ENCODE measurements at regions of chr10 and their contacts with region 1.

Region 1: GRCh38 chr10:63866075-63866746 is 345.0 kb downstream of the REEP3 start:
- H3K4me3 Mint-ChIP-seq: no peak overlapping the region
- H3K27ac Mint-ChIP-seq: no peak overlapping the region
- H3K4me1 Mint-ChIP-seq: peaks cover 8% of the 10 kb centered on the region
- H3K27me3 Mint-ChIP-seq: peaks cover 15% of the 10 kb centered on the region

Region 2: GRCh38 chr10:63707254-63707910 is 158.8 kb before region 1 on chr10:
- intact Hi-C with region 1: no loop called
- H3K4me3 Mint-ChIP-seq: no peak overlapping the region
- H3K27ac Mint-ChIP-seq: peak overlapping the region; percentile 27
- H3K4me1 Mint-ChIP-seq: peaks cover 40% of the 10 kb centered on the region
- H3K27me3 Mint-ChIP-seq: peaks cover 8% of the 10 kb centered on the region

Region 3: DNA sequence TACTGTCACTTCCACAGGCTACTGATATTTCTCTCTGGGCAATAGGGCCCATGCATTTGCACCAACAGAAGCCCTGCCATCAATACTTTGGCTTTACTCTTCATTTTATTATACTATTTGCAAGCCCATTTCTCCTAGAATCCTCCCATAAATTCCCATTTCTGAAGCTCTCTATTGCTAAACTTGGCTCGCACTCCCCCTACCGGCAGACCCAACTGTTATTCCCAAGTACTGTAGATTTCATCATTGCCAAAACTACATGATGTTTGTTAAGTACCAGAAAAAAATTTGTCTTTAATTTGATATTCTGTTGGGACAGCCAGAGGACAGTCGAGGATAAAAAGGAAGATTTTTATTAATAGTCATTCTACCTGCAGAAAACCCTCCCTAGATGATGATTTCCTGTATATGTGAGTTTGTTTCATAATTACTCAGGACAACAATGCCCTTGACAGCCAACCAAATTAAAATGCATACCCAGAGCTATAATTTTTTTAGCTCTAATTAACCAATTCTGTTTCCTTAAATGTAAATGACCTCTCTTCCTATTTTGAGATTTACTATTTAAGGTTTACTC is 46.4 kb before region 1 on chr10:
- intact Hi-C with region 1: no loop called
- H3K4me3 Mint-ChIP-seq: no peak overlapping the region
- H3K27ac Mint-ChIP-seq: no peak overlapping the region
- H3K4me1 Mint-ChIP-seq: no peaks in the 10 kb centered on the region
- H3K27me3 Mint-ChIP-seq: peaks cover 4% of the 10 kb centered on the region

Region 4: DNA sequence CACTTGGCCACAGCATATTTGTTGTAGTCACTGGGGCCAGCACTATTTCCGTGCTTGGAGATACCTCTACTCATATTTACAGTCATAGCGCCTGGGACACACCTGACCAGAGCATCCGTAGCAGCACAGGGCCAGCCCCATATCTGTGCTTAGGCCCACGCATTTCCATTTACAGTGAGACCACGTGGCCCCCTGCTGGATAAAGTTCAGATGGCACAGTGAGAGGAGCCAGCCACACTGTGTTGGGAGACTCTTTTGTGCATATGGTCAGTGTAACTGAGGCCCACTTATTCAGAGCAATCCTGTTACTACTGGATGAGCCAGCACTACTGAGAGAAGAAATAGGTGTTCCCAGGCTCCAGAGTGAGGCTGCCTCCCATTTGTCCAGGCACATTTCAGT is 110.3 kb after region 1 on chr10:
- intact Hi-C with region 1: loop called (anchors 2 kb)
- H3K4me3 Mint-ChIP-seq: no peak overlapping the region
- H3K27ac Mint-ChIP-seq: no peak overlapping the region
- H3K4me1 Mint-ChIP-seq: peaks cover 13% of the 10 kb centered on the region
- H3K27me3 Mint-ChIP-seq: no peaks in the 10 kb centered on the region

Region 5: DNA sequence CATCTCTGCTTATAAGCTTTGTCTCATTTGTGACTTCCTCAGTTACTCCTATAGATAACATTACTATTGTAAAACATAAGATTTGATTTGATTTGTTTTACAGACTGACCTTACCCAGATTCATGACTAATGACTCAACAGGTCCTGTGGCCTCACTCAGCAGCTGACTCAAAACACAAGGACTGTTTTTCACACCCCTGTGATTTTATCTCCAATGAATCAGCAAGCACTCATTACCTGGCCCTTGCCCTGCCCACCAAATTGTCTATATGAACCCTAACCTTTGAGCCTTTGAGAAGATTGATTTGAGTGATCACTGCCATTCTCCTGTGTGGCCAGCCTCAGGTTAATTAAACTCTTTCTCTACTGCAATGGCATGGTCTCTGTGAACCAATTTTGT is 1995.0 kb after region 1 on chr10:
- intact Hi-C with region 1: no loop called
- H3K4me3 Mint-ChIP-seq: no peak overlapping the region
- H3K27ac Mint-ChIP-seq: no peak overlapping the region
- H3K4me1 Mint-ChIP-seq: no peaks in the 10 kb centered on the region
- H3K27me3 Mint-ChIP-seq: no peaks in the 10 kb centered on the region

Measured in dendritic cell treated with granulocyte-macrophage colony-stimulating factor and Interleukin-4, amounts not matched to agents 40 ng/mL and 50 ng/mL, for 4 days (primary cell).